Vagina (tissue), 2 donors: ENCODE measurements at regions of chr20 and their contacts with region 1.

Region 1: GRCh38 chr20:8131598-8132483 is at the start of gene PLCB1:
- DNase-seq: peak in 1 of 2 donors; percentile 92
- H3K4me3 ChIP-seq: peak within 1 kb of the TSS; percentile 72 to 93
- H3K27ac ChIP-seq: peak within 1 kb of the TSS; percentile 89
- H3K4me1 ChIP-seq: peaks cover 17% of the 10 kb centered on the region
- H3K27me3 ChIP-seq: no peaks in the 10 kb centered on the region
- CTCF ChIP-seq: peak; percentile 41 to 80 (median 69)
- POLR2A ChIP-seq: peak in 1 of 2 donors; percentile 14
- total RNA-seq, gene PLCB1: 32.4 TPM

Region 2: DNA sequence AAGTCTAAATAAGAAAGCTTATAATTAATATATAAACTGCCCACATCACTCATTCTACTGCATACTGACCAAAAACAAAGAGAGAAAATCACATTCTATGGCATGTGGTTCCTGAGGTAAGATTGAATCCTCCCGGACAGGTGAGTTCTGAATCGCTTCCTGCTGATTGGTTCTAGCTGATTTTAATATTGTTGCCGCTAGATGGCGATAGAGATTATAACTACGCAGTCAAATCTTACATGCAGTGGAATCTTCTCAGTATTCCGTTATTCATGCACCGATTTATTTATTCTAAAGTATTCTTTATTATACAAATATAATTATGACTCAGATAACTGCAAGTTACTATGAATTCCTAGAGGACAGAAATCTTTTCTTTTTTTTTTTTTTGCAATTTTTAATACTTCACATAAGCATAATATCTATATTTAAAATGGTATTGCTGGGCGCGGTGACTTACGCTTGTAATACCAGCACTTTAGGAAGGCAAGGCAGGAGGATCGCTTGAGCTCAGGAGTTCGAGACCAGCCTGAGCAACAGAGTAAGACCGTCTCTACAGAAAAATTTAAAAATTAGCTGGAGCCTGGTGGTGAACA is 88.1 kb before region 1 on chr20:
- intact Hi-C with region 1: loop called (anchors 10 kb)
- DNase-seq: no peak
- H3K4me3 ChIP-seq: no peak overlapping the region
- H3K27ac ChIP-seq: no peak overlapping the region
- H3K4me1 ChIP-seq: no peaks in the 10 kb centered on the region
- H3K27me3 ChIP-seq: no peaks in the 10 kb centered on the region
- CTCF ChIP-seq: peak; percentile 52 to 73 (median 57)
- POLR2A ChIP-seq: no peak

Region 3: GRCh38 chr20:8389381-8390036 is 257.7 kb after region 1 on chr20:
- intact Hi-C with region 1: loop called (anchors 5 kb)
- DNase-seq: no peak
- H3K4me3 ChIP-seq: no peak overlapping the region
- H3K27ac ChIP-seq: no peak overlapping the region
- H3K4me1 ChIP-seq: peaks cover 11% of the 10 kb centered on the region
- H3K27me3 ChIP-seq: no peaks in the 10 kb centered on the region
- CTCF ChIP-seq: peak; percentile 16 to 54 (median 19)
- POLR2A ChIP-seq: no peak

Region 4: DNA sequence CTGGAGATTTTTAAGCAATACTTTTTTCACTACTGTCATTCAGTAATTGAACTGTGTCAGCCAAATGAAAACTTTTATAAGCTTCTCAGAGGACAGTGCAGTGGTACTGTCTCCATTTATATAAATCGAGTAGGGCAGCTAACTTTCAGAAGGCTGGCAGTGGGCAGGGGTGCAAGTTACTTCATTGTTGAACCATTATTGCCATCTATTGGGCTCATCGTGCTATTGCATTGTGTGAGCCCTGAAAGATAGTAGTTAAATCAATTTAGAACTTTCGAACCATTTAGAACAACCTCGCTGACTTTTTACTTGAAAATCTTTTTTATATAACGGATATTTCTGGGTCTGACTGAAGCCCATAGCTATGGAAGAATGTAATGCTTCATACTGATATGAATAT is 589.3 kb after region 1 on chr20:
- intact Hi-C with region 1: loop called (anchors 2 kb)
- DNase-seq: no peak
- H3K4me3 ChIP-seq: no peak overlapping the region
- H3K27ac ChIP-seq: no peak overlapping the region
- H3K4me1 ChIP-seq: no peaks in the 10 kb centered on the region
- H3K27me3 ChIP-seq: no peaks in the 10 kb centered on the region
- CTCF ChIP-seq: peak in 2 of 3 experiments; percentile 60 to 70
- POLR2A ChIP-seq: no peak

Region 5: GRCh38 chr20:9172851-9173250 is 1041.0 kb after region 1 on chr20:
- intact Hi-C with region 1: no loop called
- DNase-seq: no peak
- H3K4me3 ChIP-seq: no peak overlapping the region
- H3K27ac ChIP-seq: no peak overlapping the region
- H3K4me1 ChIP-seq: no peaks in the 10 kb centered on the region
- H3K27me3 ChIP-seq: no peaks in the 10 kb centered on the region
- CTCF ChIP-seq: no peak
- POLR2A ChIP-seq: no peak